ENCODE measurements at regions of chr9 and their contacts with region 1.

Region 1: GRCh38 chr9:12775679-12776512 is 1.1 kb downstream of the LURAP1L start:
- DNase-seq: peak; percentile 67 to 85
- ATAC-seq: peak; percentile 93
- H3K4me3 ChIP-seq: peak overlapping the region; percentile 69 to 89
- H3K27ac ChIP-seq: peak overlapping the region in 1 of 2 donors; percentile 72
- H3K4me1 ChIP-seq: peaks cover 2 to 8% of the 10 kb centered on the region in 2 donors
- H3K27me3 ChIP-seq: no peaks in the 10 kb centered on the region

Region 2: DNA sequence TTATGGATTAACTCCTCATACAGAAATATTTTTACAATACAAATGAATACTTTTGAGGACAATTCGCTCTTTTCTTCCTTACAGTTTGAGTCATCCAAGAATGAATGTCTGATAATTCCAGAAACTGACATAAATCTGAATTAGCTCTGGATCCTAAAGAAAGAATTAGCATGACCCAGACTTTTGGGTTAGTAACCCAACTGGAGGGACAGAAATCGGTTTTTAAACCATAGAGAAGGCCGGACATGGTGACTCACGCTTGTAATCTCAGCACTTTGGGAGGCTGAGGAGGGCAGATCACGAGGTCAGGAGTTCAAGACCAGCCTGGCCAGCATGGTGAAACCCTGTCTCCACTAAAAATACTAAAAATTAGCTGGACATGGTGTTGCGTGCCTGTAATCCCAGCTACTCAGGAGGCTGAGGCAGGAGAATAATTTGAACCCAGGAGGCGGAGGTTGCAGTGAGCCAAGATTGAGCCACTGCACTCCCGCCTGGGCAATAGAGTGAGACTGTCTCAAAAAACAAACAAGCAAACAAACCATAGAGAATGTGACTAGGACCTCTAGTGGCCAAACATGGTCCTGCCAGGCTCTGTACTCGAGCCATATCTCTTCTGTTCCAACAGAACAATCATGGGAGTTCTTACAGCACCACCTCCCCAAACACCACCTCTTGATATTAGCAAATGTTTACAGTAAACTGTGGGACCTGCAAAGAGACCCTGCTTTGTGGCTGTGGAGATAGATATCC is 43.7 kb after region 1 on chr9:
- intact Hi-C with region 1: loop called in 1 of 2 experiments (anchors 5 kb)
- DNase-seq: no peak
- ATAC-seq: no peak
- H3K4me3 ChIP-seq: no peak overlapping the region
- H3K27ac ChIP-seq: peak overlapping the region; percentile 24 to 36
- H3K4me1 ChIP-seq: peaks cover 5% of the 10 kb centered on the region in 2 donors
- H3K27me3 ChIP-seq: no peaks in the 10 kb centered on the region

Region 3: GRCh38 chr9:12838546-12838945 is 62.6 kb after region 1 on chr9:
- intact Hi-C with region 1: loop called in 1 of 2 experiments (anchors 5 kb)
- DNase-seq: no peak
- ATAC-seq: no peak
- H3K4me3 ChIP-seq: no peak overlapping the region
- H3K27ac ChIP-seq: no peak overlapping the region
- H3K4me1 ChIP-seq: peaks cover 0 to 2% of the 10 kb centered on the region in 2 donors
- H3K27me3 ChIP-seq: no peaks in the 10 kb centered on the region